ENCODE measurements at regions of chr12 and their contacts with region 1.

Region 1: DNA sequence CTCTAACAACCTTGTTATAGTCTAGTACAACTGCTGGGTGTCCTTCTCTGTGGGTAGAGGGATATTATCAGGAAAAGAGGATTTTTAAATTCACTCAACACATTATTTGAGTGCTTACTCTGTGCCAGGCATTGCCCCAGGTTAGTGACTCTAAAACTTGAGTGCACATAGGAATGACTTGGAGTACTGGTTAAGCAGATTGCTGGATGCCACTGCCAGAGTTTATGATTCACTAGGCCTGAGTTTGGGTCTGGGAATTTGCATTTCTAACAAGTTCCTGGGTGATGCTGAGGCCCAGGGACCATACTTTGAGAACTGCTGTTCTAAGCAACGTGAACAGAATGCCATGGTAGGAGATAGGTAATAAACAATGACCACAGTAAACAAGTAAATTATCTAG is 96.6 kb downstream of the CFAP54 start:
- DNase-seq: no peak
- ATAC-seq: no peak
- H3K4me3 ChIP-seq: no peak overlapping the region
- H3K4me3 Mint-ChIP-seq: no peak overlapping the region
- H3K27ac ChIP-seq: no peak overlapping the region
- H3K27ac Mint-ChIP-seq: no peak overlapping the region
- H3K4me1 ChIP-seq: no peaks in the 10 kb centered on the region
- H3K4me1 Mint-ChIP-seq: no peaks in the 10 kb centered on the region
- H3K27me3 ChIP-seq: no peaks in the 10 kb centered on the region
- H3K27me3 Mint-ChIP-seq: peaks cover 14% of the 10 kb centered on the region
- CTCF ChIP-seq: no peak

Region 2: DNA sequence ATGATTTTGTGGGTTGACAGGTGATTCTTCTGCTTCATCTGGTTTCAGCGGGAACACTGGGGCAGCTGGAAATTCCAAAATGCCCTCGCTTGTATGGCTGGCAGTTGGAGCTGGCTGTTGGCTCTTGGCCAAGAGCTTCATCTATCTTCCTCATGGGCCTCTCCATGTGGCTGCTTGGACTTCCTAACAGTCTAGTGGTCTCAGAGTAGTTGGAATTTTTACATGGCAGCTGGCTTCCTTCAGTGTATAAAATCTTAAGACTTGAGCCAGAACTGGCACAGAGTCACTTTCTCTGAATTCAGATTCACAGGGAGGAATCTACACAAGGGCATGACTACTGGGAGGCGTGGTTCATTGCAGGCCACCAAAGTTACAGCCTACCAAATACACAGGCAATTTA is 671.7 kb after region 1 on chr12:
- CTCF ChIA-PET with region 1: no interaction called
- POLR2A ChIA-PET with region 1: no interaction called
- intact Hi-C with region 1: loop called in 1 of 2 experiments (anchors 1 kb)
- DNase-seq: no peak
- ATAC-seq: no peak
- H3K4me3 ChIP-seq: no peak overlapping the region
- H3K4me3 Mint-ChIP-seq: no peak overlapping the region
- H3K27ac ChIP-seq: no peak overlapping the region
- H3K27ac Mint-ChIP-seq: no peak overlapping the region
- H3K4me1 ChIP-seq: no peaks in the 10 kb centered on the region
- H3K4me1 Mint-ChIP-seq: no peaks in the 10 kb centered on the region
- H3K27me3 ChIP-seq: no peaks in the 10 kb centered on the region
- H3K27me3 Mint-ChIP-seq: no peaks in the 10 kb centered on the region
- CTCF ChIP-seq: no peak

Measured in CD8-positive, alpha-beta T cell (primary cell).